A673 (cell line): ENCODE measurements at regions of chr17 and their contacts with region 1.

Region 1: GRCh38 chr17:81842725-81843504 is 8.1 kb upstream of the PPP1R27 start:
- DNase-seq: no peak
- H3K4me3 ChIP-seq: no peak overlapping the region
- H3K27ac ChIP-seq: no peak overlapping the region
- H3K4me1 ChIP-seq: no peaks in the 10 kb centered on the region
- H3K27me3 ChIP-seq: no peaks in the 10 kb centered on the region
- CTCF ChIP-seq: no peak

Region 2: GRCh38 chr17:81309070-81309905 is 533.6 kb before region 1 on chr17:
- CTCF ChIA-PET with region 1: no interaction called
- POLR2A ChIA-PET with region 1: interaction called, 11 read pairs
- intact Hi-C with region 1: no loop called
- DNase-seq: no peak
- H3K4me3 ChIP-seq: no peak overlapping the region
- H3K27ac ChIP-seq: no peak overlapping the region
- H3K4me1 ChIP-seq: no peaks in the 10 kb centered on the region
- H3K27me3 ChIP-seq: no peaks in the 10 kb centered on the region
- CTCF ChIP-seq: peak; percentile 30